A549 (cell line): ENCODE measurements at regions of chr12 and their contacts with region 1.

Region 1: GRCh38 chr12:110224379-110225304 is 56.4 kb upstream of the ATP2A2 start:
- DNase-seq: peak; percentile 71 to 88
- ATAC-seq: peak; percentile 77 to 88
- H3K4me3 ChIP-seq: peak overlapping the region; percentile 1; the same call in 1 of the 3 replicates
- H3K27ac ChIP-seq: peak overlapping the region; percentile 80 to 90
- H3K4me1 ChIP-seq: peaks cover 47% of the 10 kb centered on the region
- CTCF ChIP-seq: peak; percentile 68
- EP300 ChIP-seq: no peak
- POLR2A ChIP-seq: no peak
- RAD21 ChIP-seq: peak; percentile 71

Region 2: DNA sequence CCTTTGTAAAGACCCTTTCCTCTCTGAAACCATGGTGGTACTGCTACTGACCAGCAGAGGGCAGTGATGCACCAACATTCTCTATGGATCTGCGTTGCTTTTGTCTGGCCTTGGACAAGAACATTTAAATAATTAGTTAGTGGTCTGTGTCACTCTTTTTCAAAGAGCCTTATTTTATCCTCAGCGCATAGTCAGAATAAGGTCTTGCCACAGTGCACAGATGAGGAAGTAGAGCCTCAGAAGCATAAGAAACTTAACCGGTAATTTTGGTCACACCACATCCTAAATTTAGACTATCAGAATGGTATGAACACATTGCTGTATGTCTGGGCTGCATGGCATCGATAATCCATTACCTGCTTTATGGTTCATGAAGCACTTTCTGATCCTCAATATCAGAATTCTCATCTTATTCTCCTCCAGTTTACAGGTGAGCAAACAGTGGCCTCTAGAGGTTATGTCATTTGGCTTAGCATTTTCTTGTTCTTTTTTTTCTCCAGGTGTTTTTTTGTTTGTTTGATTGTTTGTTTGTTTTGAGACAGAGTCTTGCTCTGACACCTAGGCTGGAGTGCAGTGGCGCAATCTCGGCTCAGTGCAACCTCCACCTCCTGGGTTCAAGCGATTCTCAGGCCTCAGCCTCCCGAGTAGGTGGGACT is 124.2 kb before region 1 on chr12:
- CTCF ChIA-PET with region 1: interaction called, 14 read pairs
- POLR2A ChIA-PET with region 1: no interaction called
- DNase-seq: peak; percentile 55 to 84
- ATAC-seq: peak; percentile 54 to 69; a peak in 5 of 6 replicates
- H3K4me3 ChIP-seq: no peak overlapping the region
- H3K27ac ChIP-seq: peak overlapping the region; percentile 73 to 96
- H3K4me1 ChIP-seq: peaks cover 25% of the 10 kb centered on the region
- CTCF ChIP-seq: peak; percentile 97
- EP300 ChIP-seq: no peak
- POLR2A ChIP-seq: no peak
- RAD21 ChIP-seq: peak; percentile 97 to 99

Region 3: GRCh38 chr12:110205931-110206330 is 18.7 kb before region 1 on chr12:
- CTCF ChIA-PET with region 1: interaction called, 13 read pairs
- POLR2A ChIA-PET with region 1: no interaction called
- DNase-seq: no peak
- ATAC-seq: no peak
- H3K4me3 ChIP-seq: no peak overlapping the region
- H3K27ac ChIP-seq: no peak overlapping the region
- H3K4me1 ChIP-seq: peaks cover 28% of the 10 kb centered on the region
- CTCF ChIP-seq: no peak
- EP300 ChIP-seq: no peak
- POLR2A ChIP-seq: no peak
- RAD21 ChIP-seq: no peak

Region 4: DNA sequence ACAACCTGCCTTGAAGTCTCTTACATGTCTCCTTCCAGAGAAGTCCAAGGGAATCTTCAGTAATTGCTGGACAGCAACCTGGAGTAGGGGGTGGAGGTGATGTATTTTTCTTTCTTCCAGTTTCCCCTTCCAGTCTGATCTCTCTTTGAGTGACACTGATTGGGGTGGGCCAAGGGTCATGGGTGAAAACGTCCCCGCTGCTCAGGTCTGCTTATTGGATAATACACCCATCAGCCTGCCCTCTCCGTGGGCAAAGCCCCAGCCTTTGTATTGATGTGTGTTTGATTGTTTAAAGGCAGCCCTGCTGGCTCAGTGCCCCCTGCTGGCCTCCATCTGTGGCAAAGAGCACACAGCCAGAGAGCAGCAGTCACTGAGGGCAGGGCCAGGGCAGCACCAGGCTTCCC is 20.7 kb after region 1 on chr12:
- CTCF ChIA-PET with region 1: interaction called, 100 read pairs
- POLR2A ChIA-PET with region 1: interaction called, 6 read pairs
- DNase-seq: peak in 1 of 2 experiments; percentile 73
- ATAC-seq: peak in 1 of 2 experiments; percentile 18; a peak in 3 of 6 replicates
- H3K4me3 ChIP-seq: no peak overlapping the region
- H3K27ac ChIP-seq: peak overlapping the region; percentile 96 to 97
- H3K4me1 ChIP-seq: peaks cover 61% of the 10 kb centered on the region
- CTCF ChIP-seq: peak; percentile 42
- EP300 ChIP-seq: no peak
- POLR2A ChIP-seq: no peak
- RAD21 ChIP-seq: peak; percentile 47 to 68; a peak in 4 of 5 replicates

Region 5: DNA sequence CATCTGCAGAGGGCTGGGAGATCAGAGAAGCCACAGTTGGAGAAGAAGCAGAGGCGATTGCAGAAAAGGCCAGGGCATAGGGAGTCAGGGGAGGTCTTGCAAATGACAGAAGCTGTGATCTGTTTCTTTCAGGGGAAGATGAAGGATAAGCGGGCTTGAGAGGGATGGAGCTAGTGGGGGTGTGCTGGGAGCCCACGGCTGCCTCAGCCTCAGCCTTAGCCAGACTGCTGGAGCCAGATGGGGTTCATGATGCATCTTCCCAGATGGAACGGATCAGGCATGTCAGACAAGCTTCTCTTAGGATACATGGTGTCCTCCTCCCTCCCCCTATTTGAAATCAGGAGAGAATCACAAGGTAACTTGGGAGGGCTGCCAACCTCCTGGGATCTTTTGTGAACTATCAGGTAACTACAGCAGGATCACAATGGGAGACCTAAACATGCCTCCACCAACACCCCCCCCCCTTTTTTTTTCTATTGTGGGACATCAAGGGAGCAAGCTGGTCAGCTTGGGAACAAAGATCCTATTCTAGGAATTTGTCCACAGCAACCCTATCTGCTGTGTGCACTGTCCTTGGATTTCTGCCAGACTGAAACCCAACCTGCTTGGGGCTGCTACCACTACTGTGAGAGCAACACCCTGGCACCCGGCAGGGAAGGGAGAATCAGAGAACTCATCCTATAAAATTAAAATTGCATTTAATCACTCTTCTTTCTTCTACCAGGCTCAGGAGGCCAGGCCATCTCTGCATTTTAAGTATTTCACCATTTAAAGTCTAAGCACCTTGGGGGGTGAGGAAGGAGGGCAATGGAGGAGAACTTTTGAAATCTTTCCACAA is 45.7 kb after region 1 on chr12:
- CTCF ChIA-PET with region 1: interaction called, 12 read pairs
- POLR2A ChIA-PET with region 1: interaction called, 4 read pairs
- DNase-seq: peak; percentile 65 to 82
- ATAC-seq: peak; percentile 66 to 72
- H3K4me3 ChIP-seq: peak overlapping the region; percentile 31; the same call in 1 of the 3 replicates
- H3K27ac ChIP-seq: peak overlapping the region; percentile 97 to 99
- H3K4me1 ChIP-seq: peaks cover 80% of the 10 kb centered on the region
- CTCF ChIP-seq: no peak
- EP300 ChIP-seq: no peak
- POLR2A ChIP-seq: no peak
- RAD21 ChIP-seq: no peak

Region 6: GRCh38 chr12:110280779-110281548 is 56.3 kb after region 1 on chr12 and contains the start of gene ATP2A2:
- CTCF ChIA-PET with region 1: interaction called, 16 read pairs
- POLR2A ChIA-PET with region 1: interaction called, 18 read pairs
- DNase-seq: peak; percentile 85 to 90
- ATAC-seq: peak; percentile 78 to 87
- H3K4me3 ChIP-seq: peak within 1 kb of the TSS; percentile 81
- H3K27ac ChIP-seq: peak within 1 kb of the TSS; percentile 98 to 99
- H3K4me1 ChIP-seq: peaks cover 46% of the 10 kb centered on the region
- CTCF ChIP-seq: no peak
- EP300 ChIP-seq: no peak
- POLR2A ChIP-seq: peak; percentile 88
- RAD21 ChIP-seq: peak in 1 of 2 experiments; percentile 16; a peak in 2 of 5 replicates
- polyA plus RNA-seq, gene ATP2A2: 415 and 431 TPM in 2 replicates

Region 7: GRCh38 chr12:110286623-110287022 is 62.0 kb after region 1 on chr12:
- CTCF ChIA-PET with region 1: interaction called, 10 read pairs
- POLR2A ChIA-PET with region 1: interaction called, 5 read pairs
- DNase-seq: no peak
- ATAC-seq: no peak
- H3K4me3 ChIP-seq: peak overlapping the region; percentile 81; the same call in 2 of the 3 replicates
- H3K27ac ChIP-seq: peak overlapping the region; percentile 14 to 59; a peak in 3 of 6 replicates
- H3K4me1 ChIP-seq: peaks cover 51% of the 10 kb centered on the region
- CTCF ChIP-seq: no peak
- EP300 ChIP-seq: no peak
- POLR2A ChIP-seq: no peak
- RAD21 ChIP-seq: no peak